Adrenal gland (tissue), 19 donors: ENCODE measurements at regions of chr4 and their contacts with region 1.

Region 1: GRCh38 chr4:68375667-68376559 is 26.0 kb upstream of the YTHDC1 start:
- DNase-seq: peak; percentile 31 to 64 (median 48)
- H3K4me3 ChIP-seq: no peak overlapping the region
- H3K27ac ChIP-seq: no peak overlapping the region
- H3K4me1 ChIP-seq: no peaks in the 10 kb centered on the region
- H3K27me3 ChIP-seq: no peaks in the 10 kb centered on the region
- CTCF ChIP-seq: peak; percentile 78 to 91 (median 80)
- POLR2A ChIP-seq: no peak

Region 2: GRCh38 chr4:67437974-67438713 is 937.8 kb before region 1 on chr4:
- intact Hi-C with region 1: no loop called
- DNase-seq: no peak
- H3K4me3 ChIP-seq: no peak overlapping the region
- H3K27ac ChIP-seq: no peak overlapping the region
- H3K4me1 ChIP-seq: no peaks in the 10 kb centered on the region
- H3K27me3 ChIP-seq: no peaks in the 10 kb centered on the region
- CTCF ChIP-seq: no peak
- POLR2A ChIP-seq: no peak

Region 3: GRCh38 chr4:68271851-68272756 is 103.8 kb before region 1 on chr4:
- intact Hi-C with region 1: loop called (anchors 2 to 5 kb)
- DNase-seq: no peak
- H3K4me3 ChIP-seq: no peak overlapping the region
- H3K27ac ChIP-seq: no peak overlapping the region
- H3K4me1 ChIP-seq: no peaks in the 10 kb centered on the region
- H3K27me3 ChIP-seq: peaks cover 4% of the 10 kb centered on the region
- CTCF ChIP-seq: peak; percentile 66 to 86 (median 79)
- POLR2A ChIP-seq: no peak

Region 4: GRCh38 chr4:68732653-68733466 is 356.9 kb after region 1 on chr4:
- intact Hi-C with region 1: no loop called
- DNase-seq: no peak
- H3K4me3 ChIP-seq: no peak overlapping the region
- H3K27ac ChIP-seq: no peak overlapping the region
- H3K4me1 ChIP-seq: no peaks in the 10 kb centered on the region
- H3K27me3 ChIP-seq: no peaks in the 10 kb centered on the region
- CTCF ChIP-seq: no peak
- POLR2A ChIP-seq: no peak